ENCODE measurements at regions of chr21 and their contacts with region 1.

Region 1: DNA sequence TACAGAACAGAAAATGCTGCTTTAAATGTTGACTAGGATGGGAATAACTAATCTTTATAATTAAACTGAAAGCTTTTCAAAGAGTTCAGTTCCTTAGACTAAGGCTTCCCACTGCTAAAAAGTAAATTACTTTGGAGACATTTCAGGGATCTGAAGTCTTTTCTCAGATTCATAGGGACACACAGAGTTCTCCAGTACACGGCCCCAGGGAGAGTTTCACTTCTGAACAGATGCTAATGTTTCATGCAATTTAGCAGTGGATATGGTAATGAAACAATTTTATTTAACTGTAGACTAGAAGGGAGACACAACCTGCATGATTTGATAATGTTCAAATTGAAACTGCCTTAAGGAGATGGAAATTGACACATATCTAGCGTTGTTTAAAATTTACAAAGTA is 1282.6 kb downstream of the NCAM2 start:
- DNase-seq: no peak
- ATAC-seq: no peak
- H3K4me3 ChIP-seq: no peak overlapping the region
- H3K4me3 Mint-ChIP-seq: no peak overlapping the region
- H3K27ac ChIP-seq: no peak overlapping the region
- H3K27ac Mint-ChIP-seq: no peak overlapping the region
- H3K4me1 ChIP-seq: no peaks in the 10 kb centered on the region
- H3K4me1 Mint-ChIP-seq: no peaks in the 10 kb centered on the region
- H3K27me3 ChIP-seq: no peaks in the 10 kb centered on the region
- H3K27me3 Mint-ChIP-seq: no peaks in the 10 kb centered on the region
- CTCF ChIP-seq: no peak

Region 2: GRCh38 chr21:22263890-22264289 is 17.0 kb before region 1 on chr21:
- CTCF ChIA-PET with region 1: no interaction called
- POLR2A ChIA-PET with region 1: no interaction called
- intact Hi-C with region 1: no loop called
- DNase-seq: no peak
- ATAC-seq: no peak
- H3K4me3 ChIP-seq: no peak overlapping the region
- H3K4me3 Mint-ChIP-seq: no peak overlapping the region
- H3K27ac ChIP-seq: no peak overlapping the region
- H3K27ac Mint-ChIP-seq: no peak overlapping the region
- H3K4me1 ChIP-seq: no peaks in the 10 kb centered on the region
- H3K4me1 Mint-ChIP-seq: no peaks in the 10 kb centered on the region
- H3K27me3 ChIP-seq: no peaks in the 10 kb centered on the region
- H3K27me3 Mint-ChIP-seq: no peaks in the 10 kb centered on the region
- CTCF ChIP-seq: no peak

Region 3: GRCh38 chr21:22297575-22297974 is 16.7 kb after region 1 on chr21:
- CTCF ChIA-PET with region 1: no interaction called
- POLR2A ChIA-PET with region 1: no interaction called
- intact Hi-C with region 1: loop called (anchors 1 kb)
- DNase-seq: peak in 1 of 9 experiments; percentile 15
- ATAC-seq: no peak
- H3K4me3 ChIP-seq: no peak overlapping the region
- H3K4me3 Mint-ChIP-seq: no peak overlapping the region
- H3K27ac ChIP-seq: no peak overlapping the region
- H3K27ac Mint-ChIP-seq: peak overlapping the region; percentile 64
- H3K4me1 ChIP-seq: no peaks in the 10 kb centered on the region
- H3K4me1 Mint-ChIP-seq: peaks cover 15% of the 10 kb centered on the region
- H3K27me3 ChIP-seq: no peaks in the 10 kb centered on the region
- H3K27me3 Mint-ChIP-seq: no peaks in the 10 kb centered on the region
- CTCF ChIP-seq: no peak

Region 4: DNA sequence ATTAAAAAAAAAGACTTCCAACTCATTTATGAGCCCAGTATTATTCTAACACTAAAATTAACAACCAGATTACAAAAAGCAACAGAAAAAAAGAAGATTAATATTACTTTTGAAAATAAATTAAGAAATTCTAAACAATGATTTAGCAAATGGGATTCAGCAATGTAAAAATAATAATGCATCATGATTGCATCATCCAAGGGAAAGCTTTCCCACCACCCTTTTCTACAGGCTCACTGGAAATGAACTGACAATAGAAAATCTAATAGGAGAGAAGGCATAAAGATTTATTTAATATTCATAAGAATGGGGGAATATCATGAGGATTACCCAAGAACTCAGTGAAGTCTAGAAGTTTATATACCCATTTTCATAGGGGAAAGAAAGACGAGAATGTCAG is 389.3 kb after region 1 on chr21:
- CTCF ChIA-PET with region 1: no interaction called
- POLR2A ChIA-PET with region 1: no interaction called
- intact Hi-C with region 1: no loop called
- DNase-seq: no peak
- ATAC-seq: no peak
- H3K4me3 ChIP-seq: no peak overlapping the region
- H3K4me3 Mint-ChIP-seq: no peak overlapping the region
- H3K27ac ChIP-seq: no peak overlapping the region
- H3K27ac Mint-ChIP-seq: no peak overlapping the region
- H3K4me1 ChIP-seq: no peaks in the 10 kb centered on the region
- H3K4me1 Mint-ChIP-seq: no peaks in the 10 kb centered on the region
- H3K27me3 ChIP-seq: no peaks in the 10 kb centered on the region
- H3K27me3 Mint-ChIP-seq: no peaks in the 10 kb centered on the region
- CTCF ChIP-seq: no peak

Measured in CD8-positive, alpha-beta T cell (primary cell).